Sciatic nerve (tissue), 2 donors: ENCODE measurements at regions of chr13 and their contacts with region 1.

Region 1: DNA sequence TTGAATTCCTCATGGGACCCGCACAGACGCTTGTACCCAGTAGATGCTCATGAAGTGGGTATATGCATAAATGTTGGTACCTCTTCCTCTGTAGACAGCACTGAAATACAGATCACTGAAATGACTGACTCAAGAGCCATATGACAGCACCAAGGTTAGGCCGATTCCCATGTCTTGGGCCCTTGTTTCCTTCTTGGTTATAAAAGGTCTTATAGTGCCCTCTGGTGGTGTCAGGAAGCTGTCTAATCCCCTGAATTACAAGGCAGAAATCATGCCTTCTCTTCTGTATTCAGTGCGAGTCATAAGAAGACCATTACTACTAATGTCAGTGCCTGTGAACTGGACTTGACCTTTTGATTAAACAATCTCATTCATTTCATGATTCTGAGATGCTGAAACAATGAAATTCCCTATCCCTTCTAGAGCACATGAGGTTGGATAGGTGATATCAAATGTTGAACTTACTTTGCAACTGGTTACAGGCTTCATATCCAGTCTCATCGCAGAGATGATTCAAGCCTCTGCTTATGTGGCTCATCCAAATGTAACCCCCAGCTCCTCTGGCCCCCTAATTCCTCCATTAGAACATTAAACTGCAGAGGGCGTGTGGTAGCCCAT is 59.7 kb downstream of the SPATA13 start:
- DNase-seq: no peak
- ATAC-seq: peak; percentile 88

Region 2: GRCh38 chr13:24012648-24013047 is 207.5 kb before region 1 on chr13:
- intact Hi-C with region 1: loop called (anchors 5 kb)
- DNase-seq: no peak
- ATAC-seq: no peak

Region 3: GRCh38 chr13:24160454-24161009 is 59.7 kb before region 1 on chr13 and contains the start of gene SPATA13:
- intact Hi-C with region 1: no loop called
- DNase-seq: peak; percentile 97
- ATAC-seq: peak; percentile 99
- total RNA-seq, gene SPATA13: 49.8 TPM

Region 4: GRCh38 chr13:25192936-25193335 is 972.7 kb after region 1 on chr13:
- intact Hi-C with region 1: no loop called
- DNase-seq: peak; percentile 37
- ATAC-seq: peak; percentile 38